PC-3 (cell line): ENCODE measurements at regions of chr1 and their contacts with region 1.

Region 1: DNA sequence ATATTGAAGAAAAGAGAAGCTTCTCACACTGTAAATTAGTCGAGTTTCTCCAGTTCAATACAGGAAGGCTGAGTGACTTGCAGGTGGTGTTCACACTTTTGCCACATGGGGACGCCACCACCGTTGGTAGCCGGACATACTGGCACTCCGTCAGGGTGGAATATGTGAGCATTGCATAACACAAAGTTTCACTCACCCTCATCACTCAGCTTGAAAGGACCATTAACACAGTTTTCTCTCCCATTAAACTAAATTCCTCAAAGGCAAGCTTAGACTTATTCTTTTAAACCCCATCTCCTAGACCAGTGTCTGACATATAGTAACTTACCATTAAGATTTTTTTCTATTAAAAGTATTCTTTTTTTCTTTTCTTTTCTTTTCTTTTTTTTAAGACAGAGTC is 105.3 kb upstream of the SERBP1 start:
- DNase-seq: peak; percentile 87
- ATAC-seq: peak; percentile 83
- H3K4me3 ChIP-seq: no peak overlapping the region
- H3K27ac ChIP-seq: no peak overlapping the region
- H3K4me1 ChIP-seq: peaks cover 15% of the 10 kb centered on the region
- H3K27me3 ChIP-seq: no peaks in the 10 kb centered on the region
- CTCF ChIP-seq: peak; percentile 98

Region 2: DNA sequence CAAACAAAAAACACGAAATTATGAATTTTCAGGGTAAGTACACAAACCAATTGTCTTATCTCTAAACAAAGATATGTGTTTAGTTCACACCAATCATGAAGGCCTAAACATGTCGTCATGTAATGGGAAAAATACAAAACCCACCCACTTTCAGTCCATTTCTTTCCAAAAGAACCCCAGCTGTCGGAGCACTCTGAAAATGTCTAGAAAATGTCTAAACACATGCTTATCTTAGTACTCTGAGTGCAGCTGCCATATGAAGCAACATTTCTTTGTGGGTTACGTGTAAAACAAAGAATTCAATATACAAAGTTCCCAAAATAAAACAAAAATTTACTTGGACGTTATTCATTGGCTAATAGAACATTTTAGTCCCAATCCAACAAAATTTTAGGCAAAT is 128.0 kb before region 1 on chr1:
- CTCF ChIA-PET with region 1: no interaction called
- POLR2A ChIA-PET with region 1: no interaction called
- intact Hi-C with region 1: no loop called
- DNase-seq: no peak
- ATAC-seq: no peak
- H3K4me3 ChIP-seq: no peak overlapping the region
- H3K27ac ChIP-seq: no peak overlapping the region
- H3K4me1 ChIP-seq: no peaks in the 10 kb centered on the region
- H3K27me3 ChIP-seq: no peaks in the 10 kb centered on the region
- CTCF ChIP-seq: no peak

Region 3: GRCh38 chr1:67555461-67556296 is 20.2 kb after region 1 on chr1:
- CTCF ChIA-PET with region 1: interaction called, 6 read pairs
- POLR2A ChIA-PET with region 1: no interaction called
- intact Hi-C with region 1: loop called (anchors 2 kb)
- DNase-seq: no peak
- ATAC-seq: no peak; the same call in 1 of the 2 replicates
- H3K4me3 ChIP-seq: no peak overlapping the region
- H3K27ac ChIP-seq: peak overlapping the region; percentile 86
- H3K4me1 ChIP-seq: peaks cover 42% of the 10 kb centered on the region
- H3K27me3 ChIP-seq: no peaks in the 10 kb centered on the region
- CTCF ChIP-seq: no peak

Region 4: DNA sequence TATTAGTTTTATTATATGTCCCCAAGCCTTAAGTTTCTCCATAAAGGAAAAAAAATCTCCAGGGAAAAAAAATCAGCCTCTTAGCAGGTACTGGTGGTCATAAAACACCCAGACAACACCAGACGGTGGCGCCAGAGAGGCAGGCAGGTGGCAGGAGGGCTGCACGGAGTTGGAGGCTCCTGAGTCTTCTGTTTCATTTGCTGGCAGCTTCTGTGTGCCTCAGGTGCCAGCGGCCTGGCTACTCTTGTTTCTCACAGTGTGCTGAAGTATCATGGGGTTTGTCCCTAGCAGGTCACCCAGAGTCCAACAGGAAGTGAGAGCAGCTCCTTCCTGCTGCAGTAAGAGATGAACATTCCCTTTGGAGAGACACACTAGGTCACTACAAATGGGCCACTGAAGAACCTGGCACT is 26.2 kb after region 1 on chr1:
- CTCF ChIA-PET with region 1: interaction called, 12 read pairs
- POLR2A ChIA-PET with region 1: no interaction called
- intact Hi-C with region 1: loop called (anchors 2 kb)
- DNase-seq: peak; percentile 92
- ATAC-seq: peak; percentile 90
- H3K4me3 ChIP-seq: no peak overlapping the region
- H3K27ac ChIP-seq: 0 out of 2 replicates have a peak overlapping the region, but pooled peaks have one; percentile 7
- H3K4me1 ChIP-seq: peaks cover 18% of the 10 kb centered on the region
- H3K27me3 ChIP-seq: no peaks in the 10 kb centered on the region
- CTCF ChIP-seq: peak; percentile 93

Region 5: DNA sequence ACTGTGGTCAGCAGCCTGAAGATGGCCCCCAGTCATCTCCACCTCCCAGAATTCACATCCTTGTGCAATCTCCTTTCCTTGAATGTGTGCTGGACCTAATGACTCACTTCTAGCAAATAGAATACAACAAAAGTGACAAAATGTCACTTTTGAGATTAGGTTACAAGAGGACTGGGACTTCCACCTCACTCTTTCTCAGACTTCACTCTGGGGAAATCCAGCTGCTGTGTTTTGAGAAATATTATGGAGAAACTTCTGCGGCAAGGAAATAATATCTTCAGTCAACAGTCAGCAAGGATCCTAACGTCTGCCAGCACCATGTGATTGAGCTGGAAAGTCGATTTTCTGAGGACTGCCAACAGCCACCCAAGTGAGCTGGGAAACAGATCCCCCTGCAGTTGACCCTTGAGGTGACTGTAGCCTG is 79.0 kb after region 1 on chr1:
- CTCF ChIA-PET with region 1: no interaction called
- POLR2A ChIA-PET with region 1: no interaction called
- intact Hi-C with region 1: no loop called
- DNase-seq: peak; percentile 78
- ATAC-seq: peak; percentile 23; the same call in 1 of the 2 replicates
- H3K4me3 ChIP-seq: no peak overlapping the region
- H3K27ac ChIP-seq: peak overlapping the region; percentile 36
- H3K4me1 ChIP-seq: peaks cover 35% of the 10 kb centered on the region
- H3K27me3 ChIP-seq: no peaks in the 10 kb centered on the region
- CTCF ChIP-seq: no peak

Region 6: GRCh38 chr1:67760030-67760821 is 224.8 kb after region 1 on chr1:
- CTCF ChIA-PET with region 1: interaction called, 19 read pairs
- POLR2A ChIA-PET with region 1: no interaction called
- intact Hi-C with region 1: loop called (anchors 1 kb)
- DNase-seq: peak; percentile 85
- ATAC-seq: peak; percentile 82
- H3K4me3 ChIP-seq: peak overlapping the region; percentile 9; the same call in 1 of the 2 replicates
- H3K27ac ChIP-seq: peak overlapping the region; percentile 45
- H3K4me1 ChIP-seq: peaks cover 32% of the 10 kb centered on the region
- H3K27me3 ChIP-seq: no peaks in the 10 kb centered on the region
- CTCF ChIP-seq: peak; percentile 88

Region 7: DNA sequence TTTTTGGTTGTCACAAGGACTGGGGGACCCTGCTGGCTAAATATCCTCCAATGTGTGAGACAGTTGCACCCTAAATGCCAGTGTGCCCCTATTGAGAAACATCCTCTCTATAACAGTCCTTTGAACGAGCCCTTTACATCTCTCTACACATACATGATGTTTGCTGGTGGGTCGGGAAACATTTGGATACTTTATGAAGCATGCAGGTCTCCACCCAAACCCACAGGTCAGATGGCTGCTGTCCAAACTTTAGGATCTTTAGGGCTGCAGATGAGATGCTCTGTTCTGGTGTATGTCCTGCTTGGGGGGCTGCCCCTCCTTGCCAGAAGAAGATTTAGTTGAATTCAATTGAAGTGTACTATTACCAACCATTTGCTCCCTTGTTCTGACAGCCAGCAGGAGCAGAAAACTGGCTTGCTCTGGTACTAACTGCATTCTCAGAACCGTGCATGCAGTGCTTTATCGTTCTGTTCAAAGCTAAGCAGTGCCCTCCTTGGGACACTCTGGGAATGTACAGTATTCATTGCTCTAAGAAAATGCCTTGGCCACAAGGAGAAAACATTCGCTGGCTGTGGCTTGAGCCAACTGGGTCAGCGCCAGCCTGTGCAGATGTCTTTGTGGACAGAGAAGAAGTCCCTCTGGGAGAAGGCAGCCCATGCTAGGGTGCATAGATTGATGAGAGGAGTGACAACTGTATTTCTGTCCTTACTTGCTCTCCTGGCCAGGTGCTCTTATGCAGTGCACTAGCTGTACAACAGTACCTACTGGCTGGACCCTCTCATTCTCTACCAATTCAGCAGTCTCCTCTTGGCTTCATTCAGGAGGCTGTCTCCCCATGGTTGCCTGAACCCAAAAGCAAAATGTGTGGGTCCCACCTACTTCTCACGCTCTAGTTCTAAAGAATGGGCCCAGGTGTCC is 576.3 kb after region 1 on chr1:
- CTCF ChIA-PET with region 1: interaction called, 3 read pairs
- POLR2A ChIA-PET with region 1: no interaction called
- intact Hi-C with region 1: loop called (anchors 5 kb)
- DNase-seq: peak; percentile 79
- ATAC-seq: peak; percentile 72
- H3K4me3 ChIP-seq: no peak overlapping the region
- H3K27ac ChIP-seq: no peak overlapping the region
- H3K4me1 ChIP-seq: peaks cover 29% of the 10 kb centered on the region
- H3K27me3 ChIP-seq: no peaks in the 10 kb centered on the region
- CTCF ChIP-seq: peak; percentile 88